ENCODE measurements at regions of chr9 and their contacts with region 1.

Region 1: GRCh38 chr9:94952565-94953373 is 226.3 kb downstream of the AOPEP start:
- DNase-seq: no peak
- ATAC-seq: peak; percentile 44

Region 2: GRCh38 chr9:94996641-94997040 is 43.9 kb after region 1 on chr9:
- intact Hi-C with region 1: loop called (anchors 5 kb)
- DNase-seq: no peak
- ATAC-seq: peak; percentile 34